ENCODE measurements at regions of chr2 and their contacts with region 1.

Region 1: GRCh38 chr2:134148843-134149472 is 104.9 kb upstream of the MGAT5 start:
- DNase-seq: no peak
- H3K4me3 Mint-ChIP-seq: no peak overlapping the region
- H3K27ac Mint-ChIP-seq: no peak overlapping the region
- H3K4me1 Mint-ChIP-seq: no peaks in the 10 kb centered on the region
- H3K27me3 Mint-ChIP-seq: no peaks in the 10 kb centered on the region

Region 2: DNA sequence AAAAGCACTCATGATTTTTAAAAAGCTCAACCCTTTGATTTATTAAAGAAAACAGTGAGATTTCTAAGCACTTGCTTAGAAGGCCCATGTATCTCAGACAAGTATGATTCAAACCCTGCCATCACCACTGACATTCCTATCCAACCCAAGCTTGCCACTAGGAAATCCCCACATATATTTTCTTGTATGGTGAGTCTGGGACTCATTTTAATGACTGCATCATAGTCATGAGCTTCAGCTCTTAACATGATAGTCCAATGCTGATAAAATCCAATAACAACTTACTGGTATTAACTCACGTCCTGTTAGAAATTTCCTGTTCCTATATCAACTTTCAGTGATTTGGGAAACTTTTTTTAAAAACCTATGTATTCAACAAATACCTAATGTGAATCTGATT is 541.3 kb before region 1 on chr2:
- intact Hi-C with region 1: no loop called
- DNase-seq: no peak
- H3K4me3 Mint-ChIP-seq: no peak overlapping the region
- H3K27ac Mint-ChIP-seq: no peak overlapping the region
- H3K4me1 Mint-ChIP-seq: no peaks in the 10 kb centered on the region
- H3K27me3 Mint-ChIP-seq: no peaks in the 10 kb centered on the region

Region 3: GRCh38 chr2:134131681-134132489 is 17.1 kb before region 1 on chr2:
- intact Hi-C with region 1: loop called (anchors 2 kb)
- DNase-seq: no peak
- H3K4me3 Mint-ChIP-seq: no peak overlapping the region
- H3K27ac Mint-ChIP-seq: no peak overlapping the region
- H3K4me1 Mint-ChIP-seq: peaks cover 28% of the 10 kb centered on the region
- H3K27me3 Mint-ChIP-seq: peaks cover 7% of the 10 kb centered on the region

Region 4: DNA sequence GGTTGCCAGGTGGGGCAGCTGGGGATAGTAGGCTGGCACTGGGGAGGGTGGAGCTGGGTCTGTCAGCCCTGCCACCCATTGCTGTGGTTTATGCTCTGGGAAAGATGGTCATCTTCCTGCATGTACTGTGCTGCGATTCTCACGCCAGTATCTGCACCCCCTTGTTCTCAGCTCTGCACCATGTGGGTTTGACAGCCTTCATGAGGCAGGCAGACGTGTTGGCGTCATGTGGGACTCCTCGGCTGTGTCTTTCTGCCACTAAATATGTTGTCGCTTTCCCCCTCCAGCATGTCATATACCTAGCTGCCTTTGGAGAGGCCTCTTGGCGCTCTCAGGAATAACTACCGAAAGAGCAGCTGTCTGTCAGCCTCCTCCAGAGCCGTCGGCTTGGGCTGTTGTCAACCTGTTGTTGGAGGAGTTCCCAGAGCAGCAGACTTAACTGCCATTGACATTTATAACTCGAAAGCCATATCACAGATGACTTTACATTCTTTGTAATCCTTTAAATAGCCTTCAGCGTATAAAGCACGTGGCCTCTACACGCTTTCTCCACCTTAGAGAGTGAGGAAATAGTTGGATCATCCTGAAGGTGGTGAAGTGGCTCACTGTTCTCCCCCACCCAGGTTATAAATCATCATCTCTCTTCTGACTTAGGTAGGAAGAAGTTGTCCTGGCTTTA is 24.5 kb after region 1 on chr2:
- intact Hi-C with region 1: no loop called
- DNase-seq: no peak
- H3K4me3 Mint-ChIP-seq: no peak overlapping the region
- H3K27ac Mint-ChIP-seq: no peak overlapping the region
- H3K4me1 Mint-ChIP-seq: peaks cover 25% of the 10 kb centered on the region
- H3K27me3 Mint-ChIP-seq: no peaks in the 10 kb centered on the region